G401 (cell line): ENCODE measurements at regions of chr14 and their contacts with region 1.

Region 1: DNA sequence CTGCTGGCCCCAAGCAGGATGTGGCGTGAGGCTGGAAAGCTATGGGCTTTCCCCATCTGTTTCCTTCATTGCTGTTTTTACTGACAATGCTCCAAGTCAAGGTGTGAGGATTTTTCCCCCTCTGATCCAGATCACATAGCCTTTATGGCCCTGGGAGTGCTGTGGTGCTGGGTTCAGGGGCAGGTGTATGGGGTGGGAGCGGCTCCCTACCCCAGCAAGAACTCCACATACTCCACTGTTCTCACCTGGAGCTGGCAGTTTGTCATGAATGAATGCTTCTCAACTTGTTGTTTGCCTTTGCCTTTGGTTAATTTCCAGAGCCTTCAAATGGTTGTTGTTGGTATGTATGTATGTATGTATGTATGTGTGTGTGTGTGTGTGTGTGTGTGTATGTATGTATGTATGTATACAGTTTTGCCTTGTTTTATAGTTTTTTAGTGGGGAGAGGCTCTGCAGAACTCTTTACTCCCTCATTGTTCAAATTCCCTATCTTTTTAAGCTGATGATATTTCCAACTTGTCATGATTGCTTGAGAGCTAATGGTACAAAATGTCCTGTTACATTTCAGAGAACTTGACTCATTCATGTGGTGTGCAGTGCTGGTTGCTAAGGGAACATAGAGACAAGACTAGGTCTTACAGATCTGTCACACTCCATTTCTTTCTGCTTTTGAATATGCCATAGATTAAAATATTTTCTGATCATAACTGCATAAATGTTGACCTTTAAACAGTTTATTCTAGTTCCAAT is 36.6 kb upstream of the ASPG start:
- DNase-seq: no peak

Region 2: GRCh38 chr14:103808403-103809001 is 240.4 kb before region 1 on chr14:
- in situ Hi-C with region 1: loop called (anchors 25 kb)
- DNase-seq: peak; percentile 68

Region 3: DNA sequence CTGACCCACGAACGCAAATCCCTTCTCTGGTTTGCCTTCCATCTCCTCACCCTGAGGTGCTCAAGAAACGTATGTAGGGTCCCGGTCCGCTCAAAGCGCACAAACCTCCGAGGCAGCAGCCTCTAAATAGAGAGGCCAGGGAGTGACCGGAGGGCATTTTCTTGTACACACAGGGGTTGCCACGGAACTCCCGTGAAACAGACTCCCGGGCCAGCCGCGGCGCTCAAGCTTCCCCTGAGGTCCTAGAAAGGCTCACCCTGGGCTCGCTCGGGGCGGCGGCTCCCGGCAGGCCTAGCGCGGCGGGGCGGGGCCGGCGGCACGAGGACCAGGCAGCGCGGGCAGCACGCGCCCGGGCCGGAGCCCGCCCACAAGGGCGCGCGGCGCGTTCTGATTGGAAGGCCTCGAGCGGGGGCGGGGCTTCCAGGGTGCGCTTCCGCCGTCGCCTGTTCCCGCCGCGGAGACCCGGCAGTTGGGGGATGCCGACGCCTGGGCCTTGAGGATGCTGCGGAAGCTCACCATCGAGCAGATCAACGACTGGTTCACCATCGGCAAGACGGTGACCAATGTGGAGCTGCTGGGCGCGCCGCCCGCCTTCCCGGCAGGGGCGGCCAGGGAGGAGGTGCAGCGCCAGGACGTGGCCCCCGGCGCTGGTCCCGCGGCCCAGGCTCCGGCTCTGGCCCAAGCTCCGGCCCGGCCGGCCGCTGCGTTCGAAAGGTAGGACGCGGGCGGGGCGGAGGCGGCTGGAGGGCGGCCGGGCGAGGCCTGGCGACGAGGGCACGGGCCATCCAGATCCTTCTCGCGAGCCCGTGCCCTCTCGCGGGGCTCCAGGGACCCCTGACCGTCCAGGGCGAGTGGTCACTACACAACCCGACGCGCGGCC is 120.7 kb before region 1 on chr14 and contains the start of gene TDRD9:
- in situ Hi-C with region 1: loop called (anchors 25 kb)
- DNase-seq: no peak
- total RNA-seq, gene TDRD9: not detected in 2 replicates

Region 4: DNA sequence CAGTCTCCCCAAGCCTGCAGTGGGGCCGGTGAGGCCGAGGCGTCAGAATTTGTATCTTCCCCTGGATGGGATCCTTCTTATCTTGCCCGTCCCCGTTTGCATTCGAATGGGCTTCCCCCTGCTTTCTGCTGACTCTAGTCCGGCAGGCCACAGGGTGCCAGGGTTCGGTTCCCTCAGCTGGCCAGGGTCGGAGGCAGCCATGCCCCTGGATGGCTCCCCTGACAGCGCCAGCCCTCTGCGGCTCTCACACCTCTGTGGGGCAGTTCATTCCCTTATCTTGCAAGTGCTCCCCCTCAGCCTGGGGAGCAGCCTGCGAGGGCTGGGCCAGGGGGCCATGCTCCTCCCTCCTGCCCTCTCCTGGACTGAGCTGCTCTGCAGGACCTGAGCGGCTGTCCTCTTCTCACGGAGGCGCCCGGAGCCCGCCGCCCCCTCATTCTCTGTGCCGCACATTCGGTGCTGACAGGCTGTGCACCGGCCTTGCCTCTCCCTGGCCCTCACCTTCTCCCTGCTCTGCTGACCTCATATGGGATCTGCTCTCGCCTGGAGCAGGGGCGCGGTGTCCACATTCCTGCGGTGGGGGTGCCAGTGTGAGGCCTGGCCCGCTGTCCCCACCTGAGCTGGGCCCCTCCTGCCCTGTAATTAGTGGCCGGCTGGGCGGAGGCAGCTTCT is 122.2 kb after region 1 on chr14:
- in situ Hi-C with region 1: no loop called
- DNase-seq: no peak